A549 (cell line): ENCODE measurements at regions of chr10 and their contacts with region 1.

Region 1: GRCh38 chr10:103333925-103334520 is 16.9 kb downstream of the PCGF6 start:
- DNase-seq: peak; percentile 34 to 35
- ATAC-seq: no peak
- H3K4me3 ChIP-seq: no peak overlapping the region
- H3K27ac ChIP-seq: no peak overlapping the region
- H3K4me1 ChIP-seq: no peaks in the 10 kb centered on the region
- CTCF ChIP-seq: peak; percentile 69; the same call in 2 of the 3 replicates
- EP300 ChIP-seq: no peak
- POLR2A ChIP-seq: no peak
- RAD21 ChIP-seq: peak; percentile 60 to 79

Region 2: DNA sequence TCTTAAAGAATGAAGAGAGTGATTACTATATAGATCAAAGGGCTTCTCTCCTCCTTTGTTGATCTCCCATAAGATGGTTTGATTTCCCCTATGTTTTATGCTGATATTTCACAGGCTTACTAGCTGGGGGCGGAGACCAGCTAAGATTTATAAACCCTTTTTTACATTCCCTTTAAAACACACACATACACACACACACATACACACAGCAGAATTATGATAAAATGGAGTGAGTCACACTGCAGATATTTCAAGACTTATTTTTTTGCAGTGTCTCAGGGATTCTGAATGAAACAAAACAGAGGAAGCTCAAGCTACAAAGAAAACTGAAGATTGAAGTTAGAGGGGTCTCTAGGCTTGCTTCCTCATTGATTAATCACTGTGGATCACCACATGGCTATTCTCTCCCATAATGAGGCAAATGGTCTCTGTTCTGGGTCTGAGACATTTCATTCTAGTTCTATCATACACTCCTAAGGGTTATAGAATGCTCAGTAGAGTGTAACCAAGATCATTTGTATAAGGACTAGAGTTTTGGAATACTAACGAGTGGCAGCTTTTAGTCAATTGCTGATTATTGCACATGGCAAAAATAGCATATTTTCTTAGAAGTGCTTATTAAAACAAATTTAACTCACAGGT is 38.5 kb before region 1 on chr10:
- CTCF ChIA-PET with region 1: no interaction called
- POLR2A ChIA-PET with region 1: no interaction called
- DNase-seq: peak in 1 of 2 experiments; percentile 15
- ATAC-seq: peak; percentile 52 to 62; a peak in 5 of 6 replicates
- H3K4me3 ChIP-seq: no peak overlapping the region
- H3K27ac ChIP-seq: no peak overlapping the region
- H3K4me1 ChIP-seq: peaks cover 7% of the 10 kb centered on the region
- CTCF ChIP-seq: no peak
- EP300 ChIP-seq: no peak
- POLR2A ChIP-seq: no peak
- RAD21 ChIP-seq: no peak

Region 3: GRCh38 chr10:103350501-103351260 is 16.7 kb after region 1 on chr10 and contains the start of gene PCGF6:
- CTCF ChIA-PET with region 1: interaction called, 12 read pairs
- POLR2A ChIA-PET with region 1: no interaction called
- DNase-seq: peak; percentile 85 to 90
- ATAC-seq: peak; percentile 97 to 98
- H3K4me3 ChIP-seq: peak within 1 kb of the TSS; percentile 76
- H3K27ac ChIP-seq: peak within 1 kb of the TSS; percentile 88 to 97
- H3K4me1 ChIP-seq: peaks cover 10% of the 10 kb centered on the region; the same call in 2 of the 3 replicates
- CTCF ChIP-seq: no peak
- EP300 ChIP-seq: no peak
- POLR2A ChIP-seq: peak; percentile 71
- RAD21 ChIP-seq: no peak
- polyA plus RNA-seq, gene PCGF6: 11.8 and 17.6 TPM in 2 replicates